ENCODE measurements at regions of chr3 and their contacts with region 1.

Region 1: DNA sequence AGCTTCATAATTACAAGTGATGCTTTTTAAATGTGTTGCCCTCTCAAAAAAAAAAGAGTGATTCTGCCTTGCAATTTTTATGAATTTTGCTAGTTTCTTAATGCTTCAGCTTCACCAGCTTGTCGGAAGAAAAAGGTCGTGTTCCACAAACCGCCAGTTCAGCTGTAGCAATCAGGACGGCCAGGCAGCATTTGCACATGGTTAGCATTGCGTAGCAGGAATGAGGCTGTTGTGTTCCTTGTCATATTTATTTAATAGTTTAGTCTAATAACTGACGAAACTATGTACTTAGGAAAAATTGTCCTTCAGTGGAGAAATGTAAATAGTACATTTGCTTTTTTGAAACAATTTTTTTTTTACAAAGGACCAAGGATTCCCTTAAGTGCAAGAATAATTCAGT is 64.9 kb upstream of the SELENOK start:
- DNase-seq: no peak
- ATAC-seq: no peak
- H3K4me3 ChIP-seq: no peak overlapping the region
- H3K27ac ChIP-seq: no peak overlapping the region
- H3K4me1 ChIP-seq: no peaks in the 10 kb centered on the region
- H3K27me3 ChIP-seq: no peaks in the 10 kb centered on the region
- CTCF ChIP-seq: no peak

Region 2: GRCh38 chr3:53709860-53710674 is 246.5 kb before region 1 on chr3:
- CTCF ChIA-PET with region 1: no interaction called
- POLR2A ChIA-PET with region 1: no interaction called
- in situ Hi-C with region 1: no loop called
- intact Hi-C with region 1: no loop called
- DNase-seq: peak; percentile 25
- ATAC-seq: peak; percentile 87
- H3K4me3 ChIP-seq: no peak overlapping the region
- H3K27ac ChIP-seq: no peak overlapping the region; the same call in 1 of the 2 replicates
- H3K4me1 ChIP-seq: no peaks in the 10 kb centered on the region
- H3K27me3 ChIP-seq: no peaks in the 10 kb centered on the region
- CTCF ChIP-seq: peak; percentile 82

Region 3: GRCh38 chr3:53899750-53900149 is 56.8 kb before region 1 on chr3:
- CTCF ChIA-PET with region 1: no interaction called
- POLR2A ChIA-PET with region 1: no interaction called
- in situ Hi-C with region 1: no loop called
- intact Hi-C with region 1: no loop called
- DNase-seq: no peak
- ATAC-seq: no peak
- H3K4me3 ChIP-seq: no peak overlapping the region
- H3K27ac ChIP-seq: no peak overlapping the region
- H3K4me1 ChIP-seq: no peaks in the 10 kb centered on the region
- H3K27me3 ChIP-seq: peaks cover 3% of the 10 kb centered on the region
- CTCF ChIP-seq: no peak

Region 4: GRCh38 chr3:54120657-54121413 is 164.2 kb after region 1 on chr3:
- CTCF ChIA-PET with region 1: no interaction called
- POLR2A ChIA-PET with region 1: no interaction called
- in situ Hi-C with region 1: no loop called
- intact Hi-C with region 1: loop called (anchors 10 kb)
- DNase-seq: no peak
- ATAC-seq: peak; percentile 44; the same call in 1 of the 2 replicates
- H3K4me3 ChIP-seq: peak overlapping the region; percentile 14 to 15; a peak in 2 of 4 replicates
- H3K27ac ChIP-seq: no peak overlapping the region
- H3K4me1 ChIP-seq: 0 out of 2 replicates have a peak, but pooled peaks cover 2% of the 10 kb centered on the region
- H3K27me3 ChIP-seq: peaks cover 18% of the 10 kb centered on the region
- CTCF ChIP-seq: no peak